Endothelial cell of umbilical vein (primary cell): ENCODE measurements at regions of chr10 and their contacts with region 1.

Region 1: DNA sequence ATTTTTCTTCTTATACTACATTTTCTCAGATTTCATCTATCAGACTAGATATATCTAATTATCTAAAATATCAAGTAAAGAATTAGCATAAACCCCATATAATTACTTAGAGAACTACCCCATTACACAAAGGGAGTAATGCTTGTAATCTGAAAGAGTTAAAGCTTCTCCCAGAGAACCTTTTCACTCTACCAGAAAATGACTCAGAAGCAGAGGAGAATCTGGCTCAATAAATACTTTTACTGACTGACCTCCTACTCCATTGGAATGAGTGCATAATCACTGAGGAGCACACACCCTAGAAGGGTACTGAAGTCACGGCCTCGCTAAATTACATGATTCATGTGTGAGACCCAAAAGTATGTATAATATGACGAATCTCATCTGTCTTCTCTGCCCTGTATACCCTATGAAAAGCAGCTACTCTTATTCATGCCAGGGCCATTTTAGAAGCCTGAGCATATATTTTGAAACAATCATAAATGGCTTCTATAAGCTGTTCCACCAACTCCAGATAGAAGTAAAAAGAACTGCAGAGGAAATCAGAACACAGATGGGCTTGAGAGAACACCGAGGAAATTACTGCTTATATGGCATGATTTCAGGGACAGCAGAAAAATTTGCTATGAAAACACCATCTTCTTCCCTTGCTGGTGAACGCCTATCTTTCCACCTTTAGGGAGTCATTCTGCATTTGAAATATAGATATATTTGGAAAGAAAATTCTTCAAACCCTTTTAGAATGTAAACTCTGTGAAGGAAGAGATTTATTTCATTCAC is 32.7 kb downstream of the DNMBP start:
- DNase-seq: peak; percentile 87
- H3K4me3 ChIP-seq: peak overlapping the region in 1 of 3 experiments; percentile 12
- H3K27ac ChIP-seq: peak overlapping the region; percentile 69
- H3K4me1 ChIP-seq: peaks cover 57% of the 10 kb centered on the region
- H3K27me3 ChIP-seq: no peaks in the 10 kb centered on the region
- CTCF ChIP-seq: no peak
- POLR2A ChIP-seq: no peak

Region 2: GRCh38 chr10:99667108-99667751 is 309.8 kb before region 1 on chr10:
- CTCF ChIA-PET with region 1: no interaction called
- POLR2A ChIA-PET with region 1: no interaction called
- dilution Hi-C with region 1: no loop called
- intact Hi-C with region 1: no loop called
- DNase-seq: peak; percentile 60
- H3K4me3 ChIP-seq: no peak overlapping the region
- H3K27ac ChIP-seq: peak overlapping the region; percentile 50
- H3K4me1 ChIP-seq: peaks cover 10% of the 10 kb centered on the region
- H3K27me3 ChIP-seq: no peaks in the 10 kb centered on the region
- CTCF ChIP-seq: no peak
- POLR2A ChIP-seq: peak; percentile 22

Region 3: GRCh38 chr10:100004805-100005510 is 27.9 kb after region 1 on chr10:
- CTCF ChIA-PET with region 1: interaction called, 21 read pairs
- POLR2A ChIA-PET with region 1: interaction called, 3 read pairs
- dilution Hi-C with region 1: no loop called
- intact Hi-C with region 1: loop called (anchors 1 kb)
- DNase-seq: peak; percentile 38
- H3K4me3 ChIP-seq: peak overlapping the region in 2 of 3 experiments; percentile 18 to 59
- H3K27ac ChIP-seq: peak overlapping the region; percentile 83
- H3K4me1 ChIP-seq: peaks cover 57% of the 10 kb centered on the region
- H3K27me3 ChIP-seq: no peaks in the 10 kb centered on the region
- CTCF ChIP-seq: no peak
- POLR2A ChIP-seq: no peak

Region 4: GRCh38 chr10:100544950-100545349 is 567.9 kb after region 1 on chr10:
- CTCF ChIA-PET with region 1: no interaction called
- POLR2A ChIA-PET with region 1: no interaction called
- dilution Hi-C with region 1: no loop called
- intact Hi-C with region 1: no loop called
- DNase-seq: no peak
- H3K4me3 ChIP-seq: no peak overlapping the region
- H3K27ac ChIP-seq: no peak overlapping the region
- H3K4me1 ChIP-seq: no peaks in the 10 kb centered on the region
- H3K27me3 ChIP-seq: no peaks in the 10 kb centered on the region
- CTCF ChIP-seq: no peak
- POLR2A ChIP-seq: no peak